Body of pancreas (tissue), 4 donors: ENCODE measurements at regions of chr11 and their contacts with region 1.

Region 1: DNA sequence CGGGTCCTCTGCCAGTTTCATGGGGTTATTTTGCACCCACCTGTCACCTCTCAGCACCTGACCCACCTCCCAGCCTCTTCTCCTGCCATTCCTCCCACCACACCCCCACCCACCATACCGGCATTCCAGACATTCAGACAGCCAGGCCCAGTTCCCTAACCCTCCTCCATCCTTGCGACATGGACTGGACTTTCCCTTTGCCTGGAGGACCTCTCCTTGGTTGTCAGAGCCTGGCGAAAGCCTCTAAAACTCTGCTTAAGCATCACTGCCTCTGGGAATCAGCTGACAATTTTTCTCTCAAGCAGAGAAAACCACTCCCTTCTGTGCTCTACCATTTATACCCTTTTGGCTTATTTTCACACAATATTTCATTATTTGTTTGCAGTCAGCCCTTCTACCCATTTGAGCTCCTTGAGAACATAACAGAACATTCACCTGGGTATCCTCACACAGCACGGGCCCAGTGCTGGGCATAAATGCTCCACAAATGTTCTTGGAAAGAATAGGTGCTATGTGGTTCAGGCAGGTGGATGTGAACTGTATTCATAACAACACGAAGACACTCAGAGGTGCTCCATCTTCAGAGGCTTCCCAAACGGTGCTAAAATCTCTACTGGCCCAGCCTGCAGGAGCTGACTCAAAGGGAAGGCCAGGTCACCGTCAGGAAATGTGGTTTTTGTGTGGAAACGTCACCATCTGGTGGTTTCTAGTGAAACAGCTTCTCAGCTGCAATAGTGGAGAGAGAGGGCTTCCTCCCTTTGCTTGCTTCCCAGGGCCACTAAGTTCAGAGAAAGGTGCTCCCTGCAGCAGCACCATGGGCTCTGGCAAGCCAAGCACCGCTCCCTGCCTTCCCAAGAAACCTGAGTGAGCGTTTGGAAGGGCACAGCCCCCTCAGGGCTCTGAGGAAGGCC is 10.4 kb downstream of the SPATA19 start:
- DNase-seq: peak; percentile 38 to 62 (median 45)
- ATAC-seq: peak; percentile 66
- H3K4me3 ChIP-seq: no peak overlapping the region
- H3K27ac ChIP-seq: no peak overlapping the region
- H3K4me1 ChIP-seq: no peaks in the 10 kb centered on the region
- H3K27me3 ChIP-seq: no peaks in the 10 kb centered on the region
- CTCF ChIP-seq: peak; percentile 11 to 75 (median 57)
- POLR2A ChIP-seq: no peak

Region 2: GRCh38 chr11:133082851-133083488 is 752.0 kb before region 1 on chr11:
- intact Hi-C with region 1: loop called (anchors 10 kb)
- DNase-seq: peak; percentile 61 to 74 (median 70)
- ATAC-seq: peak; percentile 92
- H3K4me3 ChIP-seq: no peak overlapping the region
- H3K27ac ChIP-seq: no peak overlapping the region
- H3K4me1 ChIP-seq: peaks cover 5% of the 10 kb centered on the region
- H3K27me3 ChIP-seq: peaks cover 0 to 9% of the 10 kb centered on the region in 2 donors
- CTCF ChIP-seq: peak; percentile 31 to 99 (median 99)
- POLR2A ChIP-seq: no peak

Region 3: DNA sequence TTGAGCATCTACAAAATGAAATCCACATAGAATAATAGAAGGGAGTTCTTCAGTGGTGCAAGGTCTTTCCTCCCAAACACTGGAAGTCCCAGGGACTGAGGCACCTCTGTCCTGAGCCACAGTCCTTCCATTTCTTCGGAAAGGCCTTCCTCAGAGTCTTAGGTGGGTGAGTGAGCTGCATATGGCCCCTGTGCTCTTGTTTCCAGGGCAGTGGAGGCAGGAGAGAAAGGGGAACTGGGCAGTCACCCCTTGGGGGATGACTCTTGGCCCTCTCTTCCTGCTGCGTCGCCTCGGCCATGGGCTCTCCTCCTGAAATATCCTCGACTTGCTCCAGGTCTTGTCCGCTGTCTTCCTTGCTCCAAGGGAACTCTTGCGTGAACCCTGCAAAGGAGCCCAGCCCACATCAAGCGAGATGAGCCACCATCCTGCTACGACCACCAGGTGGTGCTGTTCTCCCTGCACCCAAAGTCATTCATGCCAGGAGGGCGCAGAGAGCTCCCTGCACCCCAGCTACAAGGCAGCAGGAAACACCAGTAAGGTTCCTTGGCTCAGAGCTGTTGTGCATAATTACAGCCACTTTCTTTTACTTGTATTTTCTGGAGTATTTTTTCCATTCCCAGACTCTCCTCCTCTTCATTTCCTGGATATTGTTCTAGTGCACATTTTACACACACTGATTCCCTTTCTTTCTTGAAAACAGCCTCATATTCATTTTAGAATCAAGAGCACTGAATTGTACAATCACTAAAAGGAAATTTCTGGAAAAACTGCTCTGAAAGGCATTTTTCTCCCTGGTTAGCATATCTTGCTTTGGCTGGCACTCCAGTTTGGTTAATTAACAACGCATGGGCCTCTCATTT is 700.4 kb before region 1 on chr11:
- intact Hi-C with region 1: loop called (anchors 10 kb)
- DNase-seq: peak; percentile 61 to 78 (median 66)
- ATAC-seq: peak; percentile 70
- H3K4me3 ChIP-seq: no peak overlapping the region
- H3K27ac ChIP-seq: no peak overlapping the region
- H3K4me1 ChIP-seq: no peaks in the 10 kb centered on the region
- H3K27me3 ChIP-seq: no peaks in the 10 kb centered on the region
- CTCF ChIP-seq: peak; percentile 68 to 87 (median 82)
- POLR2A ChIP-seq: no peak

Region 4: GRCh38 chr11:133714471-133715375 is 120.2 kb before region 1 on chr11:
- intact Hi-C with region 1: no loop called
- DNase-seq: no peak
- ATAC-seq: no peak
- H3K4me3 ChIP-seq: no peak overlapping the region
- H3K27ac ChIP-seq: no peak overlapping the region
- H3K4me1 ChIP-seq: no peaks in the 10 kb centered on the region
- H3K27me3 ChIP-seq: no peaks in the 10 kb centered on the region
- CTCF ChIP-seq: no peak
- POLR2A ChIP-seq: no peak